Caco-2 (cell line): ENCODE measurements at regions of chr1 and their contacts with region 1.

Region 1: DNA sequence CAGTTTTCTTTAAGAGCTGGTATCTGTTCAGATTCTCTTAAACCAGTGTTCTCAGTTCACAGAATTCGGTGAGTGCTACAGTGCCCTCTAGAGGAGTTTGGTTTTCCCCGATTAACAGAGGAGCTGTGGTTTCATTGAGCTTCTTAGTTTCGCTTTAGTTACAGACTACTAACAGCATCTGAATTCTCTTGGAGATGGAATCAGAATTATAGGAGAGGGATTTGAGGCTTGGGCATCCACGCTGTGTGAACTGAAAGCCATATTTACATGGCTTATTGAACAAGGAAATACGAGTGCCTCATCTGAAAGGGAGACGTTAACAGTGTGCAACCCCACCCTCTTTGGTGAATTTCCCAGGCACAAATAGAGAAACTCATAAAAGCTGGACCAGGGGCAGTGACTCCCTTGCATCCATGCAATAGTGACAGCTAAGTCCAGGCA is 202.0 kb downstream of the USH2A start:
- DNase-seq: peak; percentile 59 to 70
- H3K4me3 ChIP-seq: peak overlapping the region; percentile 37
- H3K4me3 Mint-ChIP-seq: peak overlapping the region; percentile 73
- H3K27ac Mint-ChIP-seq: peak overlapping the region; percentile 24
- H3K4me1 ChIP-seq: no peaks in the 10 kb centered on the region
- H3K4me1 Mint-ChIP-seq: peaks cover 13% of the 10 kb centered on the region
- H3K27me3 ChIP-seq: no peaks in the 10 kb centered on the region
- H3K27me3 Mint-ChIP-seq: no peaks in the 10 kb centered on the region
- CTCF ChIP-seq: peak; percentile 59 to 83

Region 2: DNA sequence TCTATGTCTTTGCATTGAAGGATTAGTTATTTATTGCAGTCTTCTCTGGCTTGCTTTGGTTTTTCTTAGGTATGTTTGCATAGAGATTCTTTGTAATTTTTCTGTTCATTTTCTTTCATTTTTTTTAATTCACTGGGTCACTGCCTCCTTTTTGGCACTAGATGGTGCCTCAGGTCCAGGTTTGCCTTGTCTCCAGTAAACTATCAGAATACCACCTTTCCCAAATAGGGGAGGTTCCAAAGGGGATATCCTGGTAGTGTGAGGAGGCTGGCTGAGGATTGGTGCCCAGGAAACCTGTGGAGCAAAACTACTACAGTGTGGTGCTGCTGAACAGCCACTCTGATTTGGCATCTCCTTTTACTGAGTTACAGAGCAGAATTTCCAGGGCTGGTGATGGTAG is 397.0 kb before region 1 on chr1:
- CTCF ChIA-PET with region 1: no interaction called
- POLR2A ChIA-PET with region 1: no interaction called
- intact Hi-C with region 1: loop called (anchors 5 kb)
- DNase-seq: peak in 1 of 2 experiments; percentile 24
- H3K4me3 ChIP-seq: no peak overlapping the region
- H3K4me3 Mint-ChIP-seq: no peak overlapping the region
- H3K27ac Mint-ChIP-seq: no peak overlapping the region
- H3K4me1 ChIP-seq: no peaks in the 10 kb centered on the region
- H3K4me1 Mint-ChIP-seq: no peaks in the 10 kb centered on the region
- H3K27me3 ChIP-seq: no peaks in the 10 kb centered on the region
- H3K27me3 Mint-ChIP-seq: no peaks in the 10 kb centered on the region
- CTCF ChIP-seq: peak; percentile 32 to 73

Region 3: DNA sequence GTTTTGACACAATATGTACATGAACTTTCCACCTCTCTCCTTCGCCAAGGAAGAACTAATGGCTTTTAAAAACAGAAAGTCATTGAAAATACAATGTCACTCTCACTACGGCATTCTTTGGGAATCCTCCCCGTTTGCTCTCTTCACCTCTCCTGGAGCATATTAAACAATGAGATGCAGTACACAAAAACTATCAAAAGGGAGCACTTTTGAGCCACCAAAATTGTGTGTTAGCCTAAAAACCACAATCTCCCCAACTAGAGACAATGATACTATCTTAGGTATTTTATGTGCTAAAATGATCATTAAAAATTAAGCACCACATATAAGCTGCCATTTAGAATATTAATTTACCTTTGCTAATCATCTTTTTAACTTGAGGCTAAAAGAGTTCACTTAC is 228.7 kb before region 1 on chr1:
- CTCF ChIA-PET with region 1: interaction called, 5 read pairs
- POLR2A ChIA-PET with region 1: no interaction called
- intact Hi-C with region 1: loop called (anchors 1 kb)
- DNase-seq: peak in 1 of 2 experiments; percentile 24
- H3K4me3 ChIP-seq: no peak overlapping the region
- H3K4me3 Mint-ChIP-seq: no peak overlapping the region
- H3K27ac Mint-ChIP-seq: no peak overlapping the region
- H3K4me1 ChIP-seq: no peaks in the 10 kb centered on the region
- H3K4me1 Mint-ChIP-seq: peaks cover 13% of the 10 kb centered on the region
- H3K27me3 ChIP-seq: no peaks in the 10 kb centered on the region
- H3K27me3 Mint-ChIP-seq: no peaks in the 10 kb centered on the region
- CTCF ChIP-seq: peak; percentile 23 to 35

Region 4: GRCh38 chr1:216111842-216112241 is 109.4 kb before region 1 on chr1:
- CTCF ChIA-PET with region 1: interaction called, 13 read pairs
- POLR2A ChIA-PET with region 1: no interaction called
- intact Hi-C with region 1: loop called (anchors 5 kb)
- DNase-seq: no peak
- H3K4me3 ChIP-seq: no peak overlapping the region
- H3K4me3 Mint-ChIP-seq: no peak overlapping the region
- H3K27ac Mint-ChIP-seq: no peak overlapping the region
- H3K4me1 ChIP-seq: no peaks in the 10 kb centered on the region
- H3K4me1 Mint-ChIP-seq: no peaks in the 10 kb centered on the region
- H3K27me3 ChIP-seq: no peaks in the 10 kb centered on the region
- H3K27me3 Mint-ChIP-seq: no peaks in the 10 kb centered on the region
- CTCF ChIP-seq: peak; percentile 6 to 17

Region 5: DNA sequence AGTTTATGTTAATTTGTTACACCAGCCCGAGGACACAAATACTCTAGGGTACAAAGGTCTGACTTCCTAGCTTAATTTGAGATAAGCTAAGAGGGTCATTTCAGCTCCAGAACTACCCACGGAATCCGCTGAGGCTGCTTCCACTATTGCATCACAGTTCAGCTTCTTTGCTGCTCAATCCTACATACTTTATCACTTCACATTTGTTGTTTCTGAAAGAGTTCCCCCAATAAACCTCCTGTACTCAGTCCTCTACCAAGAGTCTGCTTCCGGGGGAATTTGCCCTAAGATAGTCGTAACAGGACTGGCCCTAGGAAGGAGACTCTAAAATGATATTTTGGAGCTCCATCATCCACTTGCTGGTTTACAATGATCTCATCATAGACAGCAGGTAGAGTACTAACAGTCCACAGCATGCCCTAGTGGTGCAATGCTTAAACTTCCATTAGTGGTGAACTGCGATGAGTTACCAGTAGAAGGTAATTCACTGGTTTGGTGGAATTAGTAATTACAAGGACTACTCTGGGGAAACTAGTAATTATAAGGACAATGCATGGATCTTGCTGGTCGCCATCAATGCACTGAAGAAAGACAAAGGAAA is 27.3 kb before region 1 on chr1:
- CTCF ChIA-PET with region 1: interaction called, 13 read pairs
- POLR2A ChIA-PET with region 1: no interaction called
- intact Hi-C with region 1: no loop called
- DNase-seq: peak; percentile 22 to 32
- H3K4me3 ChIP-seq: no peak overlapping the region
- H3K4me3 Mint-ChIP-seq: peak overlapping the region; percentile 27
- H3K27ac Mint-ChIP-seq: no peak overlapping the region
- H3K4me1 ChIP-seq: peaks cover 11% of the 10 kb centered on the region; the same call in 1 of the 2 replicates
- H3K4me1 Mint-ChIP-seq: peaks cover 7% of the 10 kb centered on the region
- H3K27me3 ChIP-seq: no peaks in the 10 kb centered on the region
- H3K27me3 Mint-ChIP-seq: no peaks in the 10 kb centered on the region
- CTCF ChIP-seq: peak; percentile 40 to 41

Region 6: DNA sequence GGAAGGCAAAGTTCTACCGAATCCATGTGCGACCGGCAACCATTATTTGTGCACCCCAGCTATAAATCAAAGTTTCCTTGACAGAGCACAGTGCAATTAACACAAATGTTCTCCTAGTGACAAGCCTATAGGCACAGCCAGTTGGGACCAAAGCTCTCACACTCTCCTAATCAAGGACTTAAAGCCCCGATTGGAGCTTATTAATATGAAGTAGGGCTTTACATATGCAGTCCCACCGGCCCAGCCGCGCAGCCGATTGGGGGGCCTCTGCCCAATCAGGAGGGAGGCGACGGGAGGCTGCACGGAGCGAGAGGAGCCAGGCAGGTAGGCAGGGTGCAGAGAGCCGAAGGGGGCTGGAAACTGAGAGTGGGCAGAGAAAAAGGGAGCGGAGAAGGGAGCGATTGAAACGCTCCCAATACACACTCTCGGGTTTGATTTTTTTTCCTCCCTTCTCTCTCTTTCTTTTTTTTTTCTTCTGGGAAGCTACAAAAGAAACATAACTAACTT is 502.0 kb after region 1 on chr1 and contains the start of gene ESRRG:
- CTCF ChIA-PET with region 1: no interaction called
- POLR2A ChIA-PET with region 1: no interaction called
- intact Hi-C with region 1: loop called (anchors 10 kb)
- DNase-seq: peak; percentile 77 to 82
- H3K4me3 ChIP-seq: peak within 1 kb of the TSS; percentile 48
- H3K4me3 Mint-ChIP-seq: peak within 1 kb of the TSS; percentile 99
- H3K27ac Mint-ChIP-seq: peak within 1 kb of the TSS; percentile 86
- H3K4me1 ChIP-seq: 0 out of 2 replicates have a peak, but pooled peaks cover 4% of the 10 kb centered on the region
- H3K4me1 Mint-ChIP-seq: peaks cover 15% of the 10 kb centered on the region
- H3K27me3 ChIP-seq: no peaks in the 10 kb centered on the region
- H3K27me3 Mint-ChIP-seq: no peaks in the 10 kb centered on the region
- CTCF ChIP-seq: no peak
- total RNA-seq, gene ESRRG: 6.6 and 8.6 TPM in 2 replicates